Activated CD4-positive, alpha-beta T cell treated with anti-CD3 and anti-CD28 coated beads for 36 hours (primary cell): ENCODE measurements at regions of chr1 and their contacts with region 1.

Region 1: DNA sequence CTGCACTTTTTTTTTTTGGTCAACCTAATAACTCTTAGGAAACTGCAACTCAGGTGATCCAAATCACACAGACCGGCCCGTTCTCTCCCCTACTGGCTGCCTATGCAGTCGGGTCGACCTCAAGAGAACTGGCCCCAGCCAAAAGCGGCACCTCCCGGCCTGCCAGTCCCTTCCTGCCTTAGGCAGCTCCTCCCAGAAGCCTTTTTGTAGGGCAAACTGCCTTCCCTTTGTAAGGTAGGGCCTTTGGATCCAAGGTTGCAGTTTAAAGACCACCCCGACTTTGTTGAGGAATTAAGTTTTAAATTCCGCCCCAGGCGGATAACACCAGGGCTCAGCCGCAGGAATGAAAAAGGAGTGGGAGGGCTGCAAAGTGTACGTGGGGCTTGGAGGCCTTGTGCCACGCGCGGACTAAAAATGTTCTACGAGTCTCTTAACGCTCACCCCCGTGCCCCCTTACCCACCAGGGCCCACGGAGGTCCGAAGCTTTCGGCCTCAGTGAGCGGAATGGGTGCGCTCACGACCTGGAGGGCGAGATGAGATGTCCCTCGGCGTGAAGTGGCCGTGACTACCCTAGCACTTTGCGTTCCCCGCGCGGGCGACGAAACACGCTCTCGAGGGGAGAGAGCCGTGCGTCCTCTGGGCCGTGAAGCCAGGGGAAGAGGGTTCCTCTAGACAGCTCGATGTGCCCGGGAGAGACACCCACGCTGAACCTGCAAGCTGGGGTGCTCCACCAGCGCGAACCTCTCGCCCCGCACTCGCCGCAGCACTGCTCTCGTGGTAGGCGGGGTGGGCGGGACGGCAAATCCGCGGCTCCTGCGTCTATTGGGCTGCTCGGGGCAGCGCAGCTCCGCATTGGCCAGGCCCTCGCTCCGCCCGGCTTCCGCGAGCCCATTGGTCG is 489 bp upstream of the ST3GAL3 start:
- DNase-seq: peak; percentile 97
- ATAC-seq: peak; percentile 97
- H3K4me3 Mint-ChIP-seq: peak overlapping the region; percentile 89
- H3K27ac Mint-ChIP-seq: peak overlapping the region; percentile 83
- H3K4me1 Mint-ChIP-seq: peaks cover 32% of the 10 kb centered on the region
- H3K27me3 Mint-ChIP-seq: no peaks in the 10 kb centered on the region

Region 2: DNA sequence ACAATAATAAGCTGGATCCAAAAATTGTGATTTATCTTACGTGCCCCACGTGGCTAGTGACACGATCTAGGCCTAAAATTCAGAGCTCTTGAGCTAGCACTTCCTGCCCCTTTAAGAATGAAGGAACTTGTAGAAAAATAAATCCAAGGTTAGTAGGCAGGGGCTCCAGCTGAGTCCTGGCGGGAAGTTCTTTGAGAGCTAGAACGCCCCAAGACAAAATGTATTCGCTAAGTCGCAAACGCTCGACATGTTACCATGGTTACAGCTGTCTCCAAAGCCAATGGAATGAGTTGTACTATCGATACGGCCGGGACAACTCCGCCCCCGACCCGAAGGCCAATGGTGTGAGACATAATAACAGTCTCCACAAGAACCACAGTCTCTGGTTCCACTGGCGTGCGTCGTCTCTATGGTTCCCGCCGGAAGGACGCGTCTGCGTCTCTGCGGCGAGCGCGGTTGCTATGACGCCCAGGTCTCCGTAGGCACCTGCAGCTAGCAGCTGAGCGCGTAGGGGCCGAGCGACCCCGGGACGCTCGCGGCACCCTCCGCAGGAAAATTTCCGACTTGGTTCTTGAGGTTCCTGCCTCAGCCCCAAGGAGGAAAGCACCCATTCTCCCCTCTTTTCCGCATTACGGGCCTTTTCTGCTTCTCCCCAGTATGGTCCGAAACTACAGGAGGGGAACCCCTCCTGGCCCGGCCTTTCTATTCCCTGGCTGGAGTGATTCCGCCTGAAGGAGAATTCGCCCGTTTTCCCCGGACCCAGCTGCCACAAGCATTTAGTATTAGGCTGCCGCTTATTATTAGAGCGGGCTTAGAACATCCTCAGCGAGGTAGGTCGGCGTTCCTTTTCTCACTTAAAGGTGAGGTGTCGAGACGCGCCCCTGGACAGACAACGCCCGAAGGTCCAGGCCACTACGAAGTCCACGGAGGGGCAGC is 1243.8 kb before region 1 on chr1 and contains the start of gene CCDC30:
- CTCF ChIA-PET with region 1: no interaction called
- POLR2A ChIA-PET with region 1: no interaction called
- intact Hi-C with region 1: loop called in 1 of 2 experiments (anchors 5 kb)
- DNase-seq: peak; percentile 97
- ATAC-seq: peak; percentile 100
- H3K4me3 Mint-ChIP-seq: peak within 1 kb of the TSS; percentile 77
- H3K27ac Mint-ChIP-seq: peak within 1 kb of the TSS; percentile 73
- H3K4me1 Mint-ChIP-seq: peaks cover 31% of the 10 kb centered on the region
- H3K27me3 Mint-ChIP-seq: no peaks in the 10 kb centered on the region
- total RNA-seq, gene CCDC30: 1.3 to 2.3 TPM

Region 3: GRCh38 chr1:43358746-43359693 is 347.8 kb before region 1 on chr1 and contains the start of gene CDC20:
- CTCF ChIA-PET with region 1: no interaction called
- POLR2A ChIA-PET with region 1: no interaction called
- intact Hi-C with region 1: loop called in 1 of 2 experiments (anchors 1 kb)
- DNase-seq: peak; percentile 99
- ATAC-seq: peak; percentile 99
- H3K4me3 Mint-ChIP-seq: peak within 1 kb of the TSS; percentile 97
- H3K27ac Mint-ChIP-seq: peak within 1 kb of the TSS; percentile 93
- H3K4me1 Mint-ChIP-seq: peaks cover 32% of the 10 kb centered on the region
- H3K27me3 Mint-ChIP-seq: no peaks in the 10 kb centered on the region
- total RNA-seq, gene CDC20: 158 to 163 TPM

Region 4: DNA sequence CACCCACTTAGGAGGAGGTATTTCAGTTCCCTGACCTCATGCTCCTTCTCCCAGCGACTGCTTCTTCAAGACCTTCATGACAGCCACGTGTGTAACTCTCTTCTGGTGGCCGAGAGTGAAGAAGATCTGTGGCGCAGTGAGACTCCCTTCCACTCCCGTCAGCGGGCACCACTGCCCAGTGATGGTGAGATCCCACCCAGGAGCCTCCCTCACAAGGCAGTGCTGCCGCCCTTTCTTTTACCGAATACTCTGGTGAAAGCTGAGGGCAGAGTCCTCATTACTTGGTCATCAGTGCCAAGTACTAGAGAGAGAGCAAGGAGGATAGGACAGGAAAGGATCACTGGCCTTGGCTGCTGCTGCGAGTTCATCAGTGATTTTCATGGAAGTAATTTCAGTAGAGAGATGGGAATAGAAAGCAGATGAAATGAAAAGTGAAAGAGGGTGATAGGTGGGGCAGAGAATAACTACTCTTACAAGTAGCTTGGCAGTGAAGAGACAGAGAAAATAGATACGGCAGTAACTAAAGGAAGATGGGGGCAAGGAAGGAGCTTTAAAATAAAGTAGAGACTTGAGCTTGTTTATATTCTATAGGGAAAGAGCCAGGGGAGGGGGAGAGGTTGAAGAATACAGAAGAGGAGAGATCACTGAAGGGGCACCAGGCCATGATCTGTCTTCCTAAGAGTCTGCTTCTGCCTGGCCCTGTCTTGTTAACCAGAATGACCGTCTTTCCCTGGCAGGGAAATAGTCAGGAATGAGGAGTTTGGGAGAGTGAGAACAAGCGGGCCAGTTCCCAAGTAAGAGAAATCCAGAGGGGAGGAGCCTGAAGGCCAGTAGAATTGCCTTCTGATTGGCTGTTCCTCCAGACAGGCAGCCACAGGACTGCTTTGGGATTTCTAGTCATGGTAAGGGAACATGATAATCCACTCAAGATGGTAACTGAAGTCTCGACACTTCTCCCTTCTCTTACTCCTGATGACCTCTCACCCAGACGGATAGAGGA is 271.4 kb before region 1 on chr1:
- CTCF ChIA-PET with region 1: no interaction called
- POLR2A ChIA-PET with region 1: no interaction called
- intact Hi-C with region 1: no loop called
- DNase-seq: peak; percentile 2
- ATAC-seq: no peak
- H3K4me3 Mint-ChIP-seq: no peak overlapping the region
- H3K27ac Mint-ChIP-seq: no peak overlapping the region
- H3K4me1 Mint-ChIP-seq: no peaks in the 10 kb centered on the region
- H3K27me3 Mint-ChIP-seq: no peaks in the 10 kb centered on the region

Region 5: GRCh38 chr1:43529206-43529731 is 177.6 kb before region 1 on chr1:
- CTCF ChIA-PET with region 1: no interaction called
- POLR2A ChIA-PET with region 1: no interaction called
- intact Hi-C with region 1: loop called (anchors 1 kb)
- DNase-seq: peak; percentile 90
- ATAC-seq: peak; percentile 75
- H3K4me3 Mint-ChIP-seq: no peak overlapping the region
- H3K27ac Mint-ChIP-seq: no peak overlapping the region
- H3K4me1 Mint-ChIP-seq: peaks cover 20% of the 10 kb centered on the region
- H3K27me3 Mint-ChIP-seq: peaks cover 37% of the 10 kb centered on the region

Region 6: GRCh38 chr1:43934101-43934985 is 227.5 kb after region 1 on chr1:
- CTCF ChIA-PET with region 1: interaction called, 5 read pairs
- POLR2A ChIA-PET with region 1: no interaction called
- intact Hi-C with region 1: loop called in 1 of 2 experiments (anchors 5 kb)
- DNase-seq: peak; percentile 84
- ATAC-seq: peak; percentile 73
- H3K4me3 Mint-ChIP-seq: peak overlapping the region; percentile 16
- H3K27ac Mint-ChIP-seq: no peak overlapping the region
- H3K4me1 Mint-ChIP-seq: peaks cover 15% of the 10 kb centered on the region
- H3K27me3 Mint-ChIP-seq: peaks cover 25% of the 10 kb centered on the region

Region 7: GRCh38 chr1:43979528-43980254 is 272.8 kb after region 1 on chr1:
- CTCF ChIA-PET with region 1: no interaction called
- POLR2A ChIA-PET with region 1: no interaction called
- intact Hi-C with region 1: loop called in 1 of 2 experiments (anchors 1 kb)
- DNase-seq: peak; percentile 52
- ATAC-seq: peak; percentile 31
- H3K4me3 Mint-ChIP-seq: peak overlapping the region; percentile 84
- H3K27ac Mint-ChIP-seq: peak overlapping the region; percentile 76
- H3K4me1 Mint-ChIP-seq: peaks cover 36% of the 10 kb centered on the region
- H3K27me3 Mint-ChIP-seq: peaks cover 5% of the 10 kb centered on the region

Region 8: DNA sequence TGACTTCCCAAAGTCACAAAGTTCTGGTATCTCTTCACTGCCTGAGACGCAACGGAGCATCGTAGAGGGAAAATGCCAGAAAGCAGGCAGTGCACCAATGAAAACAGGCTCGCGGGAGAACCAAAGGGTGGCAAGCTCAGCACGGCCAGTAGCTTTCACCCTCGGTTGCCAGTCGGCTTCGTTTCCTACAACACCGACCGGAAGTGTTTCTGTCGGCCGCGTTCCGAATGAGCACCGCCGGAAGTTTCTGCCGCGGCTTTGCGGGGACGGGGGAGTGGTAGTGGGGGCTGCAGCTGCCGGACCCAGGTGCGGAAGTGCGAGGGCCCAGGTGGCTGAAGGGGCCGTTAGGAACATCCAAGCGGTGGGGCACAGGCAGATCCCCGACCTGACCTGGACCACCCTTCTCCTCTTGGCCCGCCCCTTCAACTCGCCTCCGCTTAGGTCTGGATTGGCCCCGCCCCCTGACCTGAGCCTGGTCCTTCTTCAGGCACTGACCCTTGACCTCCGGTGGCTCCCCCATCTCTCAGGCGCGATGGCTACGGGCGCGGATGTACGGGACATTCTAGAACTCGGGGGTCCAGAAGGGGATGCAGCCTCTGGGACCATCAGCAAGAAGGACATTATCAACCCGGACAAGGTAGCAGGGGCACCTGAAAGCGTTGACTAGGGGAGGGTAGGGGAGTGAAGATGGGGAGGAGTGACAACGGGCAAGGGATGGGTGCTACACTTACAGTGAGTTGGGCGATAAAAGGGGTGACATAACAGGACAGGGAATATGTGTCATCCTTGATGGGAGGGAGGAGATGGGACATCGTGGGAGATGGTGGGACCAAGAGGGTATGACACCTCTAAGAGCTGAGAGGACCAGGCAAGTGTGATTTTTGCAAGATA is 506.6 kb after region 1 on chr1 and contains the start of gene DMAP1:
- CTCF ChIA-PET with region 1: no interaction called
- POLR2A ChIA-PET with region 1: no interaction called
- intact Hi-C with region 1: loop called in 1 of 2 experiments (anchors 5 kb)
- DNase-seq: peak; percentile 91
- ATAC-seq: peak; percentile 92
- H3K4me3 Mint-ChIP-seq: peak within 1 kb of the TSS; percentile 94
- H3K27ac Mint-ChIP-seq: peak within 1 kb of the TSS; percentile 93
- H3K4me1 Mint-ChIP-seq: peaks cover 33% of the 10 kb centered on the region
- H3K27me3 Mint-ChIP-seq: no peaks in the 10 kb centered on the region
- total RNA-seq, gene DMAP1: 30.2 to 34.8 TPM